Left colon (tissue), 2 donors: ENCODE measurements at regions of chr13 and their contacts with region 1.

Region 1: DNA sequence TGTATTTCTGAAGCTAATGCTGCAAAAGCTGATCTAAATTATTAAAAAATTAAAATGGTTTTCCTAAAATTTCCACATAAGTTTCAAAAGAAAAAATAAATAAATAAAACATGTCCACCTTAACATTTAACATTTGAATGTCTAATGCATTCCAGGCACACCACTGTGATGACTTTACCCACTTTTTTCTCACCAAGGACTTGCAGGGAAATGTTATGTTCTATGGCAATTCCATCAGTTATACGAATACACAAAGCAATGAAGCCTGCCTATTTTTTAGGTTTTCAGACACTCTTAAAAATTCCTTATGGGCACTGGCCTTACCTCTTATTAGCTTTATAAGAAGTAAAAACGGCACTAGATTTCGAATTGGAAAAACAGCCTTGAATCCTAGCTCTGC is 10.2 kb downstream of the TSC22D1 start:
- DNase-seq: no peak
- ATAC-seq: no peak

Region 2: GRCh38 chr13:44516771-44517170 is 49.1 kb before region 1 on chr13:
- intact Hi-C with region 1: loop called in 1 of 2 experiments (anchors 10 kb)
- DNase-seq: no peak
- ATAC-seq: peak; percentile 68